ENCODE measurements at regions of chrX and their contacts with region 1.

Region 1: GRCh38 chrX:66728818-66729271 is 90.0 kb upstream of the EDA2R start:
- DNase-seq: peak; percentile 2 to 12
- ATAC-seq: no peak
- H3K4me3 ChIP-seq: peak overlapping the region; percentile 28 to 44 (median 42)
- H3K27ac ChIP-seq: no peak overlapping the region
- H3K4me1 ChIP-seq: no peaks in the 10 kb centered on the region
- H3K27me3 ChIP-seq: no peaks in the 10 kb centered on the region
- CTCF ChIP-seq: peak in 4 of 5 experiments; percentile 7 to 56 (median 39)
- POLR2A ChIP-seq: no peak

Region 2: GRCh38 chrX:65581661-65582339 is 1147.0 kb before region 1 on chrX:
- in situ Hi-C with region 1: loop called in 1 of 4 experiments (anchors 25 kb)
- intact Hi-C with region 1: loop called (anchors 5 kb)
- DNase-seq: peak in 1 of 2 donors; percentile 22
- ATAC-seq: peak; percentile 47 to 66
- H3K4me3 ChIP-seq: no peak overlapping the region
- H3K27ac ChIP-seq: no peak overlapping the region
- H3K4me1 ChIP-seq: no peaks in the 10 kb centered on the region
- H3K27me3 ChIP-seq: no peaks in the 10 kb centered on the region
- CTCF ChIP-seq: peak; percentile 53 to 77 (median 63)
- POLR2A ChIP-seq: no peak

Region 3: GRCh38 chrX:66200855-66201795 is 527.7 kb before region 1 on chrX:
- in situ Hi-C with region 1: no loop called
- intact Hi-C with region 1: loop called (anchors 5 kb)
- DNase-seq: no peak
- ATAC-seq: no peak
- H3K4me3 ChIP-seq: no peak overlapping the region
- H3K27ac ChIP-seq: no peak overlapping the region
- H3K4me1 ChIP-seq: no peaks in the 10 kb centered on the region
- H3K27me3 ChIP-seq: no peaks in the 10 kb centered on the region
- CTCF ChIP-seq: no peak
- POLR2A ChIP-seq: no peak

Region 4: DNA sequence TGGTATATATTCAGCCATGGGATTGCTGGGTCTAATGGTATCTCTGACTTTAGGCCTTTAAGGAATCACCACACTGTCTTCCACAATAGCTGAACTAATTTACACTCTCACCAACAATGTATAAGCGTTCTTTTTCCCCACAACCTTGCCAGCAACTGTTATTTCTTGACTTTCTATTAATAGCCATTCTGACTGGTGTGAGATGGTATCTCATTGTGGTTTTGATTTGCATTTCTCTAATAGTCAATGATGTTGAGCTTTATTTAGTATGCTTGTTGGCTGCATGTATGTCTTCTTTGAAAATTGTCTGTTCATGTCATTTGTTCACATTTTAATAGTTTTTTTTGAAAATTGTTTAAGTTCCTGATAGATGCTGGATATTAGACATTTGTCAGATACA is 329.6 kb before region 1 on chrX:
- in situ Hi-C with region 1: no loop called
- intact Hi-C with region 1: no loop called
- DNase-seq: no peak
- ATAC-seq: no peak
- H3K4me3 ChIP-seq: no peak overlapping the region
- H3K27ac ChIP-seq: no peak overlapping the region
- H3K4me1 ChIP-seq: no peaks in the 10 kb centered on the region
- H3K27me3 ChIP-seq: no peaks in the 10 kb centered on the region
- CTCF ChIP-seq: no peak
- POLR2A ChIP-seq: no peak